ENCODE measurements at regions of chr7 and their contacts with region 1.

Region 1: GRCh38 chr7:121994625-121995410 is 121.9 kb downstream of the PTPRZ1 start:
- DNase-seq: peak; percentile 69
- H3K4me3 ChIP-seq: no peak overlapping the region
- H3K27ac ChIP-seq: no peak overlapping the region
- H3K4me1 ChIP-seq: no peaks in the 10 kb centered on the region
- H3K27me3 ChIP-seq: no peaks in the 10 kb centered on the region
- CTCF ChIP-seq: peak; percentile 82 to 93

Region 2: GRCh38 chr7:120987683-120988590 is 1006.9 kb before region 1 on chr7:
- CTCF ChIA-PET with region 1: no interaction called
- dilution Hi-C with region 1: no loop called
- in situ Hi-C with region 1: no loop called
- intact Hi-C with region 1: loop called (anchors 10 kb)
- DNase-seq: peak; percentile 77
- H3K4me3 ChIP-seq: peak overlapping the region; percentile 32 to 40 (median 36)
- H3K27ac ChIP-seq: no peak overlapping the region
- H3K4me1 ChIP-seq: peaks cover 12% of the 10 kb centered on the region
- H3K27me3 ChIP-seq: no peaks in the 10 kb centered on the region
- CTCF ChIP-seq: peak; percentile 94 to 95

Region 3: GRCh38 chr7:121366852-121367431 is 627.9 kb before region 1 on chr7:
- CTCF ChIA-PET with region 1: interaction called, 5 read pairs
- dilution Hi-C with region 1: no loop called
- in situ Hi-C with region 1: loop called (anchors 10 kb)
- intact Hi-C with region 1: loop called (anchors 1 kb)
- DNase-seq: no peak
- H3K4me3 ChIP-seq: no peak overlapping the region
- H3K27ac ChIP-seq: no peak overlapping the region
- H3K4me1 ChIP-seq: peaks cover 4% of the 10 kb centered on the region
- H3K27me3 ChIP-seq: no peaks in the 10 kb centered on the region
- CTCF ChIP-seq: peak; percentile 69

Region 4: GRCh38 chr7:121442845-121443244 is 552.0 kb before region 1 on chr7:
- CTCF ChIA-PET with region 1: no interaction called
- dilution Hi-C with region 1: no loop called
- in situ Hi-C with region 1: no loop called
- intact Hi-C with region 1: no loop called
- DNase-seq: peak; percentile 84
- H3K4me3 ChIP-seq: no peak overlapping the region
- H3K27ac ChIP-seq: no peak overlapping the region
- H3K4me1 ChIP-seq: peaks cover 7% of the 10 kb centered on the region
- H3K27me3 ChIP-seq: no peaks in the 10 kb centered on the region
- CTCF ChIP-seq: no peak

Region 5: DNA sequence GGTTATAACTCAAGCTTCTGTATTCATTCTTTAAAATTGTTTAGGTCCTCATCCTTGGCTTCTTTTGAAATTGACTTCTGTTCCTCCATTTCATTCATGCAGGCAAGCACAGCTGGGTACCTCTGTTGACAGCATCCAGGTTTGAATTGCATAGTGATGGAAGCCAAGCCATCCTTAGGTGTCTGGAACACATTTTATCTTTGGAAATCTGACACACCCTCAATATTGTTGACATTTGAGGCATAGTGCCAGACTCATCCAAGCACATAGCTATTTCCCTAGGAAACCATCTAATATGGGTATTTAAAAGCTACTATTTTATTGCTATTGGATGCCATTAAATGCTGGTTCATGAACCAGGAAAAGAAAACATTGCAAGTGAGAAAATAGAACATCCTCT is 263.9 kb before region 1 on chr7:
- CTCF ChIA-PET with region 1: no interaction called
- dilution Hi-C with region 1: no loop called
- in situ Hi-C with region 1: loop called in 1 of 2 experiments (anchors 25 kb)
- intact Hi-C with region 1: loop called (anchors 1 kb)
- DNase-seq: no peak
- H3K4me3 ChIP-seq: no peak overlapping the region
- H3K27ac ChIP-seq: no peak overlapping the region
- H3K4me1 ChIP-seq: no peaks in the 10 kb centered on the region
- H3K27me3 ChIP-seq: no peaks in the 10 kb centered on the region
- CTCF ChIP-seq: no peak

Region 6: GRCh38 chr7:121752706-121753105 is 242.1 kb before region 1 on chr7:
- CTCF ChIA-PET with region 1: interaction called, 3 read pairs
- dilution Hi-C with region 1: no loop called
- in situ Hi-C with region 1: loop called in 1 of 2 experiments (anchors 25 kb)
- intact Hi-C with region 1: loop called (anchors 1 kb)
- DNase-seq: no peak
- H3K4me3 ChIP-seq: no peak overlapping the region
- H3K27ac ChIP-seq: no peak overlapping the region
- H3K4me1 ChIP-seq: peaks cover 3% of the 10 kb centered on the region
- H3K27me3 ChIP-seq: no peaks in the 10 kb centered on the region
- CTCF ChIP-seq: peak in 1 of 2 donors; percentile 49

Region 7: GRCh38 chr7:121882731-121883130 is 112.1 kb before region 1 on chr7:
- CTCF ChIA-PET with region 1: no interaction called
- dilution Hi-C with region 1: loop called (anchors 25 kb)
- in situ Hi-C with region 1: no loop called
- intact Hi-C with region 1: no loop called
- DNase-seq: peak; percentile 37
- H3K4me3 ChIP-seq: no peak overlapping the region
- H3K27ac ChIP-seq: no peak overlapping the region
- H3K4me1 ChIP-seq: peaks cover 12% of the 10 kb centered on the region
- H3K27me3 ChIP-seq: no peaks in the 10 kb centered on the region
- CTCF ChIP-seq: no peak